Natural killer cell (primary cell): ENCODE measurements at regions of chr17 and their contacts with region 1.

Region 1: DNA sequence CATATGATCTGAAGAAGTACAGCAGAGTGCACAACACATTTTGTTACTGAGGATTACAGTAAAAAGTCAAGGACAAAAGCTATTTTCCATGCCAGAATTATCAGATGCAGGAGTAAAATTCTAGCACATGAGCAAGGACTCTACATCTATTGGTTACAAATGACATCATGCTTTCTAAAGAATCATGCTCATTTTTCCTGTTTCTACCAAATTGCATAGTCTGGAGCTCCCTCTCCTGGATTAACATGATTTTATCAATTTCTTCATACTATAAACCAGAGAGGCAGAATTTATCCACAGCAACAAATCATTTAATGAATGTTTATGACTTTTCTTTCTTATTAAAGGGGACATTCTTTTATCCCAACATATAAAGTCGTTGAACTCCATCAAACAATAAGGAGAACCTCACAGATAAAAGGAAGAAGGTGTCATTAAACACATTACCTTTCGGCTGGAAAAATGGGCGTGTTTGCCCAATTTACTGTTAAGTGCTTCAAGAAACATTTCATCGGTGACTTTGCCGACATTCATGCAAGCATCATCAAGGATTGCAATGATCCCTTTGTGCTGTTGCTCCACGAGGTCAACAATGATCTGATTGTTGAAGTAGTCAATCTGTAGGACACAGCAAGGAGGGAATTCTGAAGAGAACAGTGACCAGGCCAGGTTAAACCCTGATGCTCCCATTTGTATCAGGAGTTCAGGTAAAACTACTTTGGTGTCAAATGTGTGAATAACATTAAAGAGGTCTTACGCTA is 121.7 kb downstream of the MYO1D start:
- DNase-seq: peak in 1 of 2 donors; percentile 72
- ATAC-seq: peak; percentile 60 to 80 (median 76)
- H3K4me3 ChIP-seq: no peak overlapping the region
- H3K4me3 Mint-ChIP-seq: no peak overlapping the region
- H3K27ac ChIP-seq: no peak overlapping the region
- H3K27ac Mint-ChIP-seq: no peak overlapping the region
- H3K4me1 ChIP-seq: no peaks in the 10 kb centered on the region
- H3K4me1 Mint-ChIP-seq: peaks cover 0 to 5% of the 10 kb centered on the region in 2 donors
- H3K27me3 ChIP-seq: no peaks in the 10 kb centered on the region
- H3K27me3 Mint-ChIP-seq: no peaks in the 10 kb centered on the region
- CTCF ChIP-seq: peak; percentile 72

Region 2: GRCh38 chr17:32461853-32462617 is 293.2 kb before region 1 on chr17:
- intact Hi-C with region 1: loop called (anchors 1 kb)
- DNase-seq: peak; percentile 52 to 84
- ATAC-seq: peak; percentile 71 to 94 (median 83)
- H3K4me3 ChIP-seq: no peak overlapping the region
- H3K4me3 Mint-ChIP-seq: no peak overlapping the region
- H3K27ac ChIP-seq: no peak overlapping the region
- H3K27ac Mint-ChIP-seq: peak overlapping the region; percentile 13 to 56
- H3K4me1 ChIP-seq: no peaks in the 10 kb centered on the region
- H3K4me1 Mint-ChIP-seq: peaks cover 21 to 22% of the 10 kb centered on the region in 2 donors
- H3K27me3 ChIP-seq: no peaks in the 10 kb centered on the region
- H3K27me3 Mint-ChIP-seq: no peaks in the 10 kb centered on the region
- CTCF ChIP-seq: peak; percentile 77

Region 3: DNA sequence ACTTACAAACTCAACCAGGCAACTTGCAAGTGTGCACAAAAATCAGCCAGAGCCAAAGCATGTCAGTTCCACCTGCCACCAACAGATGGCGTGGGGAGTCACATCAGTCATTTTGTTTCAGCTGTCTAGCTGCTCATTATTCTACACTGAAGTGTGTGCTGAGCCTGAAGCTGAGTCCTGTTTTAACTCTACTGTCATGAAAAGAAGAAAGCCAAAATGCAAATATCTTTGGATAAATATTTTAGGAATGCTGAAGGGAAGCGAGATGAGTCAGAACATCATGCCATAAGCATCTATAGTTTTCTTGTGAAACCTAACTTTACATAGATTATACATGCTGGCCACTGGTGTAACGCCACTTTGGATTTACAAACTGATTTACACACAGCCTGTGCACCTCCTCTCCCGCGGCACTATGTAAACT is 95.8 kb before region 1 on chr17:
- intact Hi-C with region 1: loop called (anchors 1 kb)
- DNase-seq: peak; percentile 49 to 81
- ATAC-seq: peak; percentile 74 to 86 (median 85)
- H3K4me3 ChIP-seq: no peak overlapping the region
- H3K4me3 Mint-ChIP-seq: no peak overlapping the region
- H3K27ac ChIP-seq: no peak overlapping the region
- H3K27ac Mint-ChIP-seq: no peak overlapping the region
- H3K4me1 ChIP-seq: no peaks in the 10 kb centered on the region
- H3K4me1 Mint-ChIP-seq: no peaks in the 10 kb centered on the region
- H3K27me3 ChIP-seq: no peaks in the 10 kb centered on the region
- H3K27me3 Mint-ChIP-seq: no peaks in the 10 kb centered on the region
- CTCF ChIP-seq: peak; percentile 93

Region 4: GRCh38 chr17:32671896-32672295 is 83.3 kb before region 1 on chr17:
- intact Hi-C with region 1: loop called (anchors 1 kb)
- DNase-seq: no peak
- ATAC-seq: no peak
- H3K4me3 ChIP-seq: no peak overlapping the region
- H3K4me3 Mint-ChIP-seq: no peak overlapping the region
- H3K27ac ChIP-seq: no peak overlapping the region
- H3K27ac Mint-ChIP-seq: no peak overlapping the region
- H3K4me1 ChIP-seq: no peaks in the 10 kb centered on the region
- H3K4me1 Mint-ChIP-seq: peaks cover 5 to 9% of the 10 kb centered on the region in 2 donors
- H3K27me3 ChIP-seq: no peaks in the 10 kb centered on the region
- H3K27me3 Mint-ChIP-seq: peaks cover 2 to 4% of the 10 kb centered on the region in 2 donors
- CTCF ChIP-seq: no peak

Region 5: DNA sequence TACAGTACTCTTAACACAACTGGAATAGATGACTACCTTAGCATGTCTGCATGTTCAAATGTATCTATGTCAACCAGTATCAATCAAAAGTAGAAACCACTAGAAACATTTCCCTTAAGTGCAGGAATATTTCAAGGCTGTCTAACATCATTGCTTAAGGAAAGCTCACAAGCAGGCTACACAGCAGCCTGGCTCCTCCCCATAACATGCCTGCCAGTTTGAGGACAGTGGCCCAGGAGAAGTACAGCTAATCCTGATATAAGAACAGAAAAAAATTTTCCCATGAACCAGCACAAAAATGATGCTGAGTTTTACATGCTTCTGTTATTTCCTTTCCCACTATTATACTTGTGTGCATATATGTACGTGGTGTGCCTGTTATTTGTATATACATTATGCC is 53.4 kb before region 1 on chr17:
- intact Hi-C with region 1: no loop called
- DNase-seq: no peak
- ATAC-seq: no peak
- H3K4me3 ChIP-seq: no peak overlapping the region
- H3K4me3 Mint-ChIP-seq: no peak overlapping the region
- H3K27ac ChIP-seq: no peak overlapping the region
- H3K27ac Mint-ChIP-seq: no peak overlapping the region
- H3K4me1 ChIP-seq: no peaks in the 10 kb centered on the region
- H3K4me1 Mint-ChIP-seq: no peaks in the 10 kb centered on the region
- H3K27me3 ChIP-seq: no peaks in the 10 kb centered on the region
- H3K27me3 Mint-ChIP-seq: no peaks in the 10 kb centered on the region
- CTCF ChIP-seq: no peak